K562 (cell line): ENCODE measurements at regions of chr1 and their contacts with region 1.

Region 1: DNA sequence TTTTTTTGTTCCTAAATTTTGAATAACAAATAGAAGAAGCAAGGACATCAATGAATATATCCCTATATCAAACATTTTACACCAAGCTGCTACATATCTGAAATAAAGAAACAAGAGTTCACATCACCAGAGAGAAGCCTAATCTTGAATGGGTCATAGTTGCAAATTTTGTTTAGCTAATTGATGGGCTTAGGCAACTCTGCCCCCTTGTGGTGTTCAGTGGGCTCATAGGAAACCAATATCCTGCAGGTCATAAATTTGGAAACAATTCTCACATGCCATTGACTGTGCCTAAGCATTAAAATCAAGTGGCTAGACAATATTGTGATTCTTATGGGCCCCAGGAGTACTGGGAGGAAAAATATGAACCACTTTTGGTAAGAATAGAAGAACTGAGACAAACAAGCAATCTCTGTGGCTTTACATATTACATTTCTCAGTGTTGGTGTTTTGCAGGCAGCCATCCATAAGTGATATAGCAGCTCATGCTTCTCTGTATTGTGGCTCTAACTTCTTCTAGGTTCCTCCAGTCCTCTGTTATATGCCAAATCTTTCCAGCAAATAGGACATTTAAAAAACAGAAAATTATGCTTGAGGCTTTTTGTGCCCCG is 1262.8 kb upstream of the PRMT6 start:
- DNase-seq: peak; percentile 11 to 37 (median 14)
- ATAC-seq: no peak
- H3K4me3 ChIP-seq: no peak overlapping the region
- H3K27ac ChIP-seq: no peak overlapping the region
- H3K4me1 ChIP-seq: no peaks in the 10 kb centered on the region
- H3K27me3 ChIP-seq: no peaks in the 10 kb centered on the region
- CTCF ChIP-seq: peak; percentile 10 to 28 (median 25); a peak in 2 of 6 replicates
- EP300 ChIP-seq: no peak
- POLR2A ChIP-seq: no peak
- RAD21 ChIP-seq: peak in 1 of 2 experiments; percentile 49; a peak in 3 of 4 replicates

Region 2: GRCh38 chr1:104780470-104781078 is 1013.1 kb before region 1 on chr1:
- CTCF ChIA-PET with region 1: no interaction called
- POLR2A ChIA-PET with region 1: no interaction called
- in situ Hi-C with region 1: no loop called
- intact Hi-C with region 1: loop called (anchors 5 kb)
- DNase-seq: peak; percentile 14 to 29 (median 20)
- ATAC-seq: no peak
- H3K4me3 ChIP-seq: no peak overlapping the region
- H3K27ac ChIP-seq: no peak overlapping the region
- H3K4me1 ChIP-seq: no peaks in the 10 kb centered on the region
- H3K27me3 ChIP-seq: no peaks in the 10 kb centered on the region
- CTCF ChIP-seq: peak; percentile 24 to 67 (median 58); a peak in 4 of 6 replicates
- EP300 ChIP-seq: no peak
- POLR2A ChIP-seq: no peak
- RAD21 ChIP-seq: peak; percentile 49 to 67; a peak in 3 of 4 replicates